ENCODE measurements at regions of chr14 and their contacts with region 1.

Region 1: DNA sequence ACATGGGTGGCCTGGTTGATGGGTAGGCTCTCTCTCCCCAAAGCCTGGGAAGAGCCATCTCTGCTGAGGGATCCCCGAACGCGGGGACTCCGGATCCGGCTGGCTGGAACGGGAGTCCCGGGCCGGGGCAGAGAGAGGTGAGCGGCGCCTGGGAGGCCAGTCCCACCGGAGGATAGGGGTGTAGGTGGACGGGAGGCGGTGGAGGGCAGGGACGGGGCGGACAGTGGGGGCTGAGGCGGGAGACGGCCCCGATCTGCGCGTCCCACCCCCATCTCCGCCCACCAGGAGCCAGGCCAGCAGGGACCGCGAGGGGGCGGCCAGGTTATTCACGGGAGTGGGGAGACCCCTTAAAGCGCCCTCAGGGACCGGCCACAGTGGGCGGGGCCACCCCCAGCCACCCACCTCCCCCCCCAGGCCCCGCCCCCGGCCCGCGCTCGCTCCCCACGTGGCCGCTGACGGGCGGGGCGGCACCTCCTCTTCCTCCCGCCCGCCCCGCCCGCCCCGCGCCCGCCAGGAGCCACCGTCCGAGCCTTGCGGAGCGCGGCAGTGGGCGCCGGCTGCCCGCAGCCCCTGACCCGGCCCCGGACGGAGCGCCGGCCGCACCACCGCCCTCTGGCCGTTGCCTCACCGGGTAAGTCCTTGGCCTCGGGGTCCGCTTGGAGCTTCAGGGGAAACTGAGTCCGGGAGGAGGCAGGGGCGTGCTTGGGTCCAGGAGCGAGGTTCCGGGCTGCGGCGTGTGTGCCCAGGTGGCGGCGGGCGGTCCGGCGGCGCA is at the start of gene INF2:
- DNase-seq: peak; percentile 76
- H3K4me3 Mint-ChIP-seq: peak within 1 kb of the TSS; percentile 76
- H3K27ac Mint-ChIP-seq: peak within 1 kb of the TSS; percentile 83
- H3K4me1 Mint-ChIP-seq: peaks cover 24% of the 10 kb centered on the region
- H3K27me3 Mint-ChIP-seq: no peaks in the 10 kb centered on the region
- CTCF ChIP-seq: no peak
- total RNA-seq, gene INF2: 91.6 and 102 TPM in 2 replicates

Region 2: DNA sequence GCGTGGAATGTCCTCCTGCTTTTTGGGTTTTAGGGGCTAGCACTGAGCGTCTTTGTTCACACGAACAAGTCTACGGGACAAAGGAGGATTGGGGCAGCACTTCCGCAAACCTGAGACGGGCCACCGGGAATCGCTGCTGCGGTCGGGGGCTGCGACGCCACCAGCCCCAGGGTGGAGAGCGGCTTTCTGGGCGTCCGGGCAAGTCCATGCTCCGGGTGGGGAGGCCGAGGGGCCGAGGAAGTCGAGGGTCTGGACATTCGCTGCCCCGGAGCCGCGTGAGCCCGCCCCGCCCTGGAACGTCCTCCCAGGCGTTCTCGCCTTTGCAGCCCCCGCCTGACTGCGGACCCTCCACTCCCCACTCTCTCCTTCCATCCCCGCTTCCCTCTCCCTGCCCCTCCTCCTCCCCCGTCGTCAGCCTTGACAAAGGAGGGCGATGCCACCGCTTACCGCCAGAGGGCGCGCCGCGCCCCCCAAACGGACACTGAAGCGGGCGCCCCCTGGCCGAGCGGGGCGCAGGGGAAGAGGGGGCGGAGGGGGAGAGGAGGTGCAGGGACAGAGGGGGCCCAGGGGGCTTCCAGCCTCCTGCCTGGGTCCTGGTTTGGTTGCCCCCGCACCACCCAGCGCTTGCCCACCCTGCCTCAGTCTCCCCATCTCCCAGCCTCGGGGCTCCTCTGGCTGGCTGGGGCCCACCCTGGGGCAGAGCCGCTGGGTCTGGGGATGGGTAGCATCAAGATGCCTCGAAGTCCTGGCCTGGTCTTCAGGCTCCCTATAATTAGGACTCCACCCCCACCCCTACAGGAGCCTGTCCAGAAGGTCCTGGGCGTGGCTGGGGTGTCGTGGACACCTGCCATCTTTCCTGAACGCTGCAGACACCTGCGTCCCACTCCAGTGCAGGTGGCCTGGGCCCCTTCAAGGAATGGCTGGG is 39.0 kb before region 1 on chr14:
- CTCF ChIA-PET with region 1: no interaction called
- POLR2A ChIA-PET with region 1: no interaction called
- intact Hi-C with region 1: loop called (anchors 2 kb)
- DNase-seq: peak; percentile 56
- H3K4me3 Mint-ChIP-seq: no peak overlapping the region
- H3K27ac Mint-ChIP-seq: no peak overlapping the region
- H3K4me1 Mint-ChIP-seq: no peaks in the 10 kb centered on the region
- H3K27me3 Mint-ChIP-seq: peaks cover 11% of the 10 kb centered on the region
- CTCF ChIP-seq: peak; percentile 97

Region 3: GRCh38 chr14:104665657-104666522 is 23.4 kb before region 1 on chr14:
- CTCF ChIA-PET with region 1: interaction called, 3 read pairs
- POLR2A ChIA-PET with region 1: no interaction called
- intact Hi-C with region 1: loop called (anchors 1 kb)
- DNase-seq: peak; percentile 48
- H3K4me3 Mint-ChIP-seq: no peak overlapping the region
- H3K27ac Mint-ChIP-seq: no peak overlapping the region
- H3K4me1 Mint-ChIP-seq: no peaks in the 10 kb centered on the region
- H3K27me3 Mint-ChIP-seq: peaks cover 9% of the 10 kb centered on the region
- CTCF ChIP-seq: peak; percentile 15

Region 4: GRCh38 chr14:104677512-104678332 is 11.6 kb before region 1 on chr14:
- CTCF ChIA-PET with region 1: interaction called, 3 read pairs
- POLR2A ChIA-PET with region 1: interaction called, 60 read pairs
- intact Hi-C with region 1: no loop called
- DNase-seq: peak; percentile 80
- H3K4me3 Mint-ChIP-seq: peak overlapping the region; percentile 70
- H3K27ac Mint-ChIP-seq: peak overlapping the region; percentile 78
- H3K4me1 Mint-ChIP-seq: peaks cover 30% of the 10 kb centered on the region
- H3K27me3 Mint-ChIP-seq: no peaks in the 10 kb centered on the region
- CTCF ChIP-seq: no peak

Region 5: GRCh38 chr14:104708606-104709268 is 19.4 kb after region 1 on chr14:
- CTCF ChIA-PET with region 1: no interaction called
- POLR2A ChIA-PET with region 1: no interaction called
- intact Hi-C with region 1: loop called (anchors 1 kb)
- DNase-seq: peak; percentile 72
- H3K4me3 Mint-ChIP-seq: no peak overlapping the region
- H3K27ac Mint-ChIP-seq: no peak overlapping the region
- H3K4me1 Mint-ChIP-seq: peaks cover 6% of the 10 kb centered on the region
- H3K27me3 Mint-ChIP-seq: no peaks in the 10 kb centered on the region
- CTCF ChIP-seq: peak; percentile 94

Region 6: DNA sequence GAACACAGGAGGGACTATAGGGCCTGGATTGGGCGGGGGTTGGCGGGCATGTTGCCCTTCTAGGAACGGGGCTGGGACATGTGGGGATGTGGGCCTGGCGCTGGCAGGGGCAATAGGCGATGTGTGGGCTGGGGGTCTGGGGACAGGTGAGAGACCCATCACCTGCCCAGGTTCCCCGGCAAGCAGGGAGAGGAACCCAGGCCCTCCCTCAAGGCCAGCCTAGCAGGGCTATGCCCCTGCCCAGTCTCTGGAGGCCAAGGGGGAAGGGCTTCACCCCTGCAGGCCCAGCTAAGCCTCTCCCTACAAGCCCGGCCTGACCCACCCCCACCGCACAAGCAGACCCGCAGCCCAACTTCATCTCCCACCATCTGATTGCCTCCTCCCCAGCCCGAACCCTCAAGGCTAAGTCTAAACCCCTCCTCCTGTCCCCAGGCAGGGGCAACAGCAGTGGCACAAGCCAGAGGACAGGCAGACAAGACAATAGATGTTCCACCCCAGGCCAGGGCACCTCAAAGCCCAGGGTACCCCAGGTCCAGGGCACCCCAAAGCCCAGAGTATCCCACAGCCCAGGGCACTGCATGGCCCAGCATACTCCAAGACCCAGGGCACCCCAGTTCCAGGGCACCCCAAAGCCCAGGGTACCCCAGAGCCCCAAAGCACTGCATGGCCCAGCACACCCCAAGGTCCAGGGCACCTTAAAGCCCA is 472.8 kb after region 1 on chr14:
- CTCF ChIA-PET with region 1: no interaction called
- POLR2A ChIA-PET with region 1: no interaction called
- intact Hi-C with region 1: no loop called
- DNase-seq: no peak
- H3K4me3 Mint-ChIP-seq: no peak overlapping the region
- H3K27ac Mint-ChIP-seq: no peak overlapping the region
- H3K4me1 Mint-ChIP-seq: peaks cover 12% of the 10 kb centered on the region
- H3K27me3 Mint-ChIP-seq: no peaks in the 10 kb centered on the region
- CTCF ChIP-seq: no peak